Activated T-helper 1 cell treated with anti-CD3 and anti-CD28 coated beads, Interleukin-12 subunit alpha, Interleukin-12 subunit beta, Interleukin-2, Interleukin-4 antibody, amounts not matched to agents 30 ng/mL and 10 ng/mL and 1 ng/mL, durations not matched to agents 14 hours and 24 hours and 36 hours (primary cell): ENCODE measurements at regions of chr3 and their contacts with region 1.

Region 1: DNA sequence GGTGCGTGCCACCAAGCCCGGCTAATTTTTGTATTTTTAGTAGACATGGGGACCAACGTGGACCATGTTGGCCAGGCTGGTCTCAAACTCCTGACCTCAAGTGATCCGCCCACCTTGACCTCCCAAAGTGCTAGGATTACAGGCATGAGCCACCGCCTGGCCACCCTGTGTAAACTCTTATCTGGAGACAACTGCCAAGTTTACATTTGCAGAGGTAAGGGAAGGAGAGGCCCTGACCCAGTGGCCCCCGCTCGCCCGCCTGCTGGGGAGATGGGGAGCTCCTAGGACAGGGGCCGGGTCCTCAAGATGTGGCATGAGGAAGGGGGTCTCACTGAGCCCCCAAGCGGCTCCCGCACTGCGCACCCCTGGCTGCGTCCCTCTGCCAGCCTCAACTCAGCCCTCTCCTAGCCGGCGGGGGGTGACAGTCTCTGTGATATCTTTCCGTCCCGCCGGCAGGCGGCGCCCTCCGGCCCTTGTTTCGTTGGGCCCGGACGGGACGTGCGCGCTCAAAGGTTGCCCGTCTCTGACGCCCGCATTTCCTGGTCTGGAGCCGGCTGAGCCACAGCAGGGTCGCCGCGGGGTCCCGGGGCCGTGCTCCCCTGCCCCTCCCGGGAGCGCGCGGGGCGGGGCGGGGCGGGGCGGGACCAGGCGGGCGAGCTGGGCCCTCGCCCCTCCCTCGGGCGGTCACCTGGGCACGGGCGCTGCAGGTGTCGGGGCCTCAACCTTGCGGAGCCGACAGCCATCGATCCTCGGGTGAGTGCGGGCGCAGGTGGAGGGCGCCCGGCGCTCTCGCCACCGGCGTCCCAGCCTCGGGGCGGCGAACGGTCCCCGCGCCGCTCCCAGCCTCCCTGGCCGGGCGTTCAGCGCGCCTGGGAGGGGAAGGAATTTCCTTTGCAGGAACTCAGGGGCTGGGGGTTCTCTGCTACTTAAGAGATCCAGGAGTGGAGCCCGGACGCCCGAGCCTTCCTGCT is at the start of gene GPR160:
- DNase-seq: peak; percentile 73
- H3K4me3 Mint-ChIP-seq: peak within 1 kb of the TSS; percentile 82
- H3K27ac Mint-ChIP-seq: peak within 1 kb of the TSS; percentile 42
- H3K4me1 Mint-ChIP-seq: peaks cover 24% of the 10 kb centered on the region
- H3K27me3 Mint-ChIP-seq: peaks cover 4% of the 10 kb centered on the region
- total RNA-seq, gene GPR160: 3.4 and 3.5 TPM in 2 replicates

Region 2: GRCh38 chr3:169863458-169863899 is 174.3 kb before region 1 on chr3:
- intact Hi-C with region 1: loop called (anchors 1 kb)
- DNase-seq: peak; percentile 44
- H3K4me3 Mint-ChIP-seq: no peak overlapping the region
- H3K27ac Mint-ChIP-seq: no peak overlapping the region
- H3K4me1 Mint-ChIP-seq: peaks cover 24% of the 10 kb centered on the region
- H3K27me3 Mint-ChIP-seq: peaks cover 25% of the 10 kb centered on the region

Region 3: GRCh38 chr3:169998568-169999131 is 39.1 kb before region 1 on chr3:
- intact Hi-C with region 1: loop called (anchors 5 kb)
- DNase-seq: no peak
- H3K4me3 Mint-ChIP-seq: no peak overlapping the region
- H3K27ac Mint-ChIP-seq: peak overlapping the region; percentile 67
- H3K4me1 Mint-ChIP-seq: peaks cover 26% of the 10 kb centered on the region
- H3K27me3 Mint-ChIP-seq: no peaks in the 10 kb centered on the region

Region 4: GRCh38 chr3:170089862-170090600 is 52.3 kb after region 1 on chr3:
- intact Hi-C with region 1: loop called (anchors 5 kb)
- DNase-seq: no peak
- H3K4me3 Mint-ChIP-seq: no peak overlapping the region
- H3K27ac Mint-ChIP-seq: no peak overlapping the region
- H3K4me1 Mint-ChIP-seq: peaks cover 3% of the 10 kb centered on the region
- H3K27me3 Mint-ChIP-seq: no peaks in the 10 kb centered on the region

Region 5: DNA sequence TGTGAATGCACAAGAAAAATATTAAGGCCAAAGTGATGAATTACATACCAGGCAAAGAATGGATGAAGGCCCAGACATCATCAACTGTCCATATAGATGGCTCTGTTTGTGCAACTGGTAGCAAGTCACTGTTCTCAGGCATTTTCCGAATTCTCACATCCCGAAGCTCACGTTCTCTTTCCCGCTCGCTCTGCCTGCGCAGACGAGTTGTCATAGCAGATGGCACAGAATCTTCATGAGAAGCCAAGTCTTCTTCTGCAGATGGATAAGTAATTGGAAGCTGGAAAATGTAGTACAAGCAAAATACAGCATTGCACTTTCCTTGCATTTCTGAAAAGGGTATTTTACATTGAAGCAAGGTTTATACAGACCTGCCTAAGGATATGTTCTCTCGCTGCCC is 64.7 kb after region 1 on chr3:
- intact Hi-C with region 1: no loop called
- DNase-seq: no peak
- H3K4me3 Mint-ChIP-seq: no peak overlapping the region
- H3K27ac Mint-ChIP-seq: no peak overlapping the region
- H3K4me1 Mint-ChIP-seq: peaks cover 15% of the 10 kb centered on the region
- H3K27me3 Mint-ChIP-seq: no peaks in the 10 kb centered on the region